ENCODE measurements at regions of chr11 and their contacts with region 1.

Region 1: DNA sequence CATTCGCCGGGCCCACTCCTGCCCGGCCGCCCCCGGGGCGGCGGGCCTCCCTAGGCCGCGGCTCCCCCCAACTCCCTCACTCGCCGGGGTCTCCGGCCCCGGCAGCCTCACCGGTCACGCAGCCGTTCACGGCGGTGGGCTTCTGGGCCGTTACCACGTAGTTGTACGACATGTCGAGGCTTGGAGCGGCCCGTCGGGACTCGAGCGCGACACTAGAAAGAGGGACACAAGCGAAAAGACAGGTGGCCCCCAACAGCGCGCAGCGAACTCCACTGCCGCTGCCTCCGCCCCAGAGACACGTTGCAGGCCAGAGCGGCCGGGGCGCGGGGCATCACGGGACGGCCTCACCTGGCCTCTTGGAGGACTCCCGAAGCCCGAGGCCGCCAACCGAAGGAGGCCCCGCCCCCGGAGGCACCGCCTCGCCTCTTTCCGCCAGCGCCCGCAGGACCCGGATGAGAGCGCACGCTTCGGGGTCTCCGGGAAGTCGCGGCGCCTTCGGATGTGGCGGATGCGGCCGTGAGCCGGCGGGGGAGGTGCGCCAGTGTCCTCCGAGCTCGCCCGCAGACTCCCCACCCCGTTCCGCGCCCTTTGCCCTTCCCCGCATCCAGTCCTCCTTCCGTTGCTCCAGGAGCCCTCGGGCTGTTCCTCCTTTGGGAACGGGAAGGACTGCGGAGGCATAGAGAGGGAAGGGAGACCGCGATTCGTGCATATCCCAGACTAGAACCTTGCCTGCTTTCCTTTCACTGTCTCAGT is at the starts of genes DDB1 and TKFC:
- DNase-seq: peak; percentile 93 to 97 (median 95)
- ATAC-seq: peak; percentile 92
- H3K4me3 ChIP-seq: peak within 1 kb of the TSS; percentile 88
- H3K27ac ChIP-seq: peak within 1 kb of the TSS; percentile 97
- H3K4me1 ChIP-seq: peaks cover 40 to 56% of the 10 kb centered on the region in 2 experiments; a peak in 4 of 5 replicates
- H3K27me3 ChIP-seq: no peaks in the 10 kb centered on the region
- CTCF ChIP-seq: no peak
- EP300 ChIP-seq: no peak
- POLR2A ChIP-seq: peak; percentile 92
- RAD21 ChIP-seq: no peak
- polyA plus RNA-seq, gene DDB1: 172 to 361 TPM
- polyA plus RNA-seq, gene TKFC: 2.0 to 2.3 TPM

Region 2: GRCh38 chr11:61254403-61255025 is 78.5 kb before region 1 on chr11:
- CTCF ChIA-PET with region 1: interaction called, 5 read pairs
- POLR2A ChIA-PET with region 1: no interaction called
- in situ Hi-C with region 1: no loop called
- intact Hi-C with region 1: loop called (anchors 5 kb)
- DNase-seq: peak; percentile 80 to 88 (median 86)
- ATAC-seq: peak; percentile 97
- H3K4me3 ChIP-seq: no peak overlapping the region
- H3K27ac ChIP-seq: no peak overlapping the region
- H3K4me1 ChIP-seq: peaks cover 0 to 13% of the 10 kb centered on the region in 2 experiments; a peak in 2 of 5 replicates
- H3K27me3 ChIP-seq: peaks cover 3 to 17% of the 10 kb centered on the region in 2 experiments; a peak in 3 of 5 replicates
- CTCF ChIP-seq: peak; percentile 90 to 95 (median 94)
- EP300 ChIP-seq: no peak
- POLR2A ChIP-seq: no peak
- RAD21 ChIP-seq: peak; percentile 79 to 92

Region 3: DNA sequence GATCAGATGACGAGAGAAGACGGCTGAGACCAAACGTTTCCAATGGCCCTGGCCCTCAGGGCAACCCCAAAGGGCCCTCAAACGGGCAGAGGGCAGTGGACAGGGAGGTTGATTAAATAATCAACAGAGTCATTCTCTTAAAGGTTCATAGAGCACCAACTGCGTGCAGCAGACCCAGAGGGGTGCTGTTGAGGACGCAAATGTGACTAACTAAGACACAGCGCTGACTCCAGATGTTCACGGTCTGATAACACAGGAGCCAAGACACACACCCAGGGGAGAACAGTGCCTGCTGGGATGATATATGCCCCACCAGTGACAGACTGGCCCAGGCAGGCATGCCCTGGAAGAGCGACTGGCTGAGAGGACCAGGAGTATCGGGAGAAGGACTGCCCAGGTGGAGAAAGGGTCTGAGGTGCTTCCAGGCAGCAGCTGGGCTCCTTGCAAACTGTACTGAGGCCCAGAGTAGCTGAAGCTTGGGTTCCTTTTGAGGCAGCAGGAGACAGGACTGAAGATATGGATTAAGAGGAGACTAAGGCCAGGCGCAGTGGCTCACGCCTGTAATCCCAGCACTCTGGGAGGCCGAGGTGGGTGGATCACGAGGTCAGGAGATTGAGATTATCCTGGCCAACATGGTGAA is 45.5 kb before region 1 on chr11:
- CTCF ChIA-PET with region 1: no interaction called
- POLR2A ChIA-PET with region 1: interaction called, 5 read pairs
- in situ Hi-C with region 1: no loop called
- intact Hi-C with region 1: loop called (anchors 5 kb)
- DNase-seq: peak; percentile 88 to 97 (median 93)
- ATAC-seq: peak; percentile 95
- H3K4me3 ChIP-seq: no peak overlapping the region
- H3K27ac ChIP-seq: peak overlapping the region; percentile 97
- H3K4me1 ChIP-seq: peaks cover 25 to 43% of the 10 kb centered on the region in 2 experiments
- H3K27me3 ChIP-seq: no peaks in the 10 kb centered on the region
- CTCF ChIP-seq: no peak
- EP300 ChIP-seq: peak; percentile 96
- POLR2A ChIP-seq: peak; percentile 61
- RAD21 ChIP-seq: 0 out of 4 replicates have a peak, but pooled peaks of 1 of the 2 experiments have one; percentile 2

Region 4: GRCh38 chr11:61309739-61310138 is 23.2 kb before region 1 on chr11:
- CTCF ChIA-PET with region 1: no interaction called
- POLR2A ChIA-PET with region 1: interaction called, 12 read pairs
- in situ Hi-C with region 1: no loop called
- intact Hi-C with region 1: no loop called
- DNase-seq: no peak
- ATAC-seq: no peak
- H3K4me3 ChIP-seq: no peak overlapping the region
- H3K27ac ChIP-seq: no peak overlapping the region
- H3K4me1 ChIP-seq: no peaks in the 10 kb centered on the region
- H3K27me3 ChIP-seq: no peaks in the 10 kb centered on the region
- CTCF ChIP-seq: no peak
- EP300 ChIP-seq: no peak
- POLR2A ChIP-seq: no peak
- RAD21 ChIP-seq: no peak

Region 5: DNA sequence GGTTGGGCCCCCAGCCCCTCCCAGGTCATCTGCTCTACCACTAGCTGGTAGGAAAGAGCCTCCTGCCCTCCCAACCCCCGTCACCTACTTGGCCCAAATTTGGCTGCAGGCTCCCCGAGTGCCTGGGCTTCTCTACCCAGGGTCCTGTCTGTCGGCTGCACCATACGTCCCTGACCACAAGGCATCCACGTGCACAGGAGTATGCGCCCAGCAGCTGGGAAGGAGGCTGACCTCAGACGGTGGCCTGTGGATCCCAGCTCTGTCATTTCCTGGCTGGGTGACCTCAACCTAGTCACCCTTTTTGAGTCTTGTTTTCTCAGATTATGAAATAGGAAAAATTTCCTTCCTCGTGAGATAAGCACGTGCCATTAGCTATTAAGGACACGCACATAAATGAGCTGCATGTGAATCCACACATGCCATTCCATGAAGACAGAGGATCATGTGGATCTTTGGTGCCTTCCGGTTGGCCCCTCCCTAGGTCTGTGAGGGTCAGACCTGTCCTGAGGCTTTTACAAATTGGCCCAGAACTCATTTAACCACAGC is 15.0 kb after region 1 on chr11:
- CTCF ChIA-PET with region 1: no interaction called
- POLR2A ChIA-PET with region 1: interaction called, 16 read pairs
- in situ Hi-C with region 1: no loop called
- intact Hi-C with region 1: no loop called
- DNase-seq: no peak
- ATAC-seq: peak; percentile 48
- H3K4me3 ChIP-seq: no peak overlapping the region
- H3K27ac ChIP-seq: no peak overlapping the region; the same call in 2 of the 3 replicates
- H3K4me1 ChIP-seq: peaks cover 29 to 46% of the 10 kb centered on the region in 2 experiments; a peak in 4 of 5 replicates
- H3K27me3 ChIP-seq: no peaks in the 10 kb centered on the region
- CTCF ChIP-seq: no peak
- EP300 ChIP-seq: no peak
- POLR2A ChIP-seq: no peak; the same call in 1 of the 2 replicates
- RAD21 ChIP-seq: no peak

Region 6: DNA sequence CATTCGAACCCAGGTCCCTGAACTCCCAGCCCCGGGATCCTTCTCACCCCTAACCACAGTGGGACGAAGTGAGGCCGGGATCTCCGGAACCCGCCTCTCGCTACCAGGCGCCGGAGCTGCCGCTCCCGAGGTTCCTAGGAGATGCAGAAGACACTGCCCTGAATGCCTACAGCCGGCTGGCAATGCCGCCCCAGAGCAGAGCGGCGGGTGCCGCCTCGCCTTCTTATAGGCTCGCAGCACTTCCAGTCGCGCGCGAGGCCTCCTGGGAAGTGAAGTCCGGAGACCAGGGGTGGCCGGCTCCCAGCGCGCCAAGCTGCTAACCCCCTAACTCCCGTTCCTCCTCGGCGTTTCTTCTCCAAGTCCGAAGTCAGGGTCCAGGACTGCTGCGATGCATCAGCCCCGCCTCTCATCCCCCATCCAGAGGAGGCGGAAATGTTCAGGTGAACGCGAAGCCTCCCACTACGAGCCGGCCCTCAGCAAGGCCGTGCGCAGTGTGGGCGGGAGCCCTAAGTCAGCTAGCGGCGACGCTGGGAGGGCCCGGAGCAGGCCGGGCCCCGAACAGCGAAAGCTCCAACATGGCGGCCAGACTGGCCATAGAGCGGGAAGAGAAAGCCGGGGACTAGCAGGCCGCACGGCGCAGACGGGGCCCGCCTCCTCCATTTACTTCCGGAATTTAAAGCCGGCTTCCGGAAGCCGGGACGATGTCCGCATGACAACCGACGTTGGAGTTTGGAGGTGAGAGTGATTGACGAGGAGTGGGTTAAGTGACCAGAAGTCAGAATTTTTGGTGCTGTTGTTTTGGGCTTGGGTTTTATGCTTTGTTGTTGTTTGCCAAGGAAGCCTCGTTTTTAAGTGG is 28.9 kb after region 1 on chr11 and contains the starts of genes CYB561A3 and TMEM138:
- CTCF ChIA-PET with region 1: no interaction called
- POLR2A ChIA-PET with region 1: interaction called, 37 read pairs
- in situ Hi-C with region 1: no loop called
- intact Hi-C with region 1: loop called (anchors 2 kb)
- DNase-seq: peak; percentile 90 to 96 (median 91)
- ATAC-seq: peak; percentile 94
- H3K4me3 ChIP-seq: peak within 1 kb of the TSS; percentile 67
- H3K27ac ChIP-seq: peak within 1 kb of the TSS; percentile 96
- H3K4me1 ChIP-seq: peaks cover 24 to 36% of the 10 kb centered on the region in 2 experiments
- H3K27me3 ChIP-seq: no peaks in the 10 kb centered on the region
- CTCF ChIP-seq: no peak
- EP300 ChIP-seq: peak; percentile 3; the same call in 1 of the 2 replicates
- POLR2A ChIP-seq: peak; percentile 92
- RAD21 ChIP-seq: no peak
- polyA plus RNA-seq, gene CYB561A3: 30.1 to 44.3 TPM
- polyA plus RNA-seq, gene TMEM138: 127 to 146 TPM

Region 7: GRCh38 chr11:61384271-61385242 is 51.6 kb after region 1 on chr11:
- CTCF ChIA-PET with region 1: interaction called, 135 read pairs
- POLR2A ChIA-PET with region 1: interaction called, 23 read pairs
- in situ Hi-C with region 1: loop called (anchors 5 kb)
- intact Hi-C with region 1: loop called (anchors 1 kb)
- DNase-seq: peak; percentile 36 to 82 (median 54)
- ATAC-seq: peak; percentile 95
- H3K4me3 ChIP-seq: no peak overlapping the region
- H3K27ac ChIP-seq: no peak overlapping the region
- H3K4me1 ChIP-seq: peaks cover 3 to 6% of the 10 kb centered on the region in 2 experiments; a peak in 2 of 5 replicates
- H3K27me3 ChIP-seq: no peaks in the 10 kb centered on the region
- CTCF ChIP-seq: peak; percentile 84 to 97 (median 91)
- EP300 ChIP-seq: no peak
- POLR2A ChIP-seq: no peak
- RAD21 ChIP-seq: peak; percentile 89 to 98

Measured in K562 (cell line).